ENCODE measurements at regions of chr1 and their contacts with region 1.

Region 1: GRCh38 chr1:168178638-168179437 is at the start of gene TIPRL:
- DNase-seq: peak; percentile 95 to 98 (median 97)
- ATAC-seq: peak; percentile 96 to 98 (median 97)
- H3K4me3 ChIP-seq: peak within 1 kb of the TSS; percentile 65 to 88 (median 86)
- H3K27ac ChIP-seq: peak within 1 kb of the TSS; percentile 81 to 89 (median 81)
- H3K4me1 ChIP-seq: no peaks in the 10 kb centered on the region
- H3K27me3 ChIP-seq: no peaks in the 10 kb centered on the region
- CTCF ChIP-seq: peak; percentile 49 to 76 (median 64)
- POLR2A ChIP-seq: peak; percentile 87
- total RNA-seq, gene TIPRL: 12.1 to 24.1 (median 15.7) TPM

Region 2: GRCh38 chr1:168234846-168235547 is 56.2 kb after region 1 on chr1:
- intact Hi-C with region 1: loop called in 1 of 2 experiments (anchors 10 kb)
- DNase-seq: no peak
- ATAC-seq: peak; percentile 43 to 68 (median 57)
- H3K4me3 ChIP-seq: no peak overlapping the region
- H3K27ac ChIP-seq: peak overlapping the region in 2 of 3 donors; percentile 11 to 47
- H3K4me1 ChIP-seq: peaks cover 0 to 39% (median 17%) of the 10 kb centered on the region in 4 donors
- H3K27me3 ChIP-seq: no peaks in the 10 kb centered on the region
- CTCF ChIP-seq: peak; percentile 39 to 51 (median 43)
- POLR2A ChIP-seq: no peak

Measured in right lobe of liver (tissue), 6 donors.